Right ventricle myocardium superior (tissue), 1 donor: ENCODE measurements at regions of chr3 and their contacts with region 1.

Region 1: DNA sequence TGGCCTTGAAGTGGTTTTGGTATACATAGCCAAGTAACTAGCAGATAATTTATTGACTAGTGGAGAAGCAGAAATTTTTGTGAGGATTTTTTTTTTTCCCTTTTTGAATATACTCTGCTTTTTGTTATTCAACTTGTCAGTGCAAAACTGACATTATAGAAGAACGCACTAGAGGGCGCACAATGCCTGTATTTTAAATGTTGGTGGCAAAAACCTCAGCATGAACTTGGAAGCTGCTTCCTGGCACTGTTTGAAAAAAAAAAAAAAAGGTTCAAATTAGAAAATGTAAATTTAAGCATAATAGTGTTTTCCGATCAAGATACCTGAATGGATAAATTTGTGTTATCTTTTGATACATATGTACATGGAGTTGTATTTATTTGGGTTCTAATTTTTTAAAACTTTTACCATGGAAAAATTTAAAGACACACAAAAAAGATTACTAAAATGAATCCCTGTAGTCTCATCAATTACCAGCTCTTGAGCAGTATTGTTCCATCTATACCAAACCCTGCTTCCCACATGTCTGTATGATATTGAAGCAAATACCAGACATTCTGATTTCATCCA is 56.0 kb downstream of the SLC25A26 start:
- DNase-seq: no peak
- ATAC-seq: peak; percentile 79

Region 2: GRCh38 chr3:66372681-66373350 is 96.0 kb after region 1 on chr3:
- intact Hi-C with region 1: loop called (anchors 5 kb)
- DNase-seq: peak; percentile 70
- ATAC-seq: peak; percentile 74